ENCODE measurements at regions of chr6 and their contacts with region 1.

Region 1: GRCh38 chr6:34055223-34055933 is 90.5 kb downstream of the GRM4 start:
- DNase-seq: peak; percentile 60 to 87
- H3K4me3 ChIP-seq: no peak overlapping the region
- H3K27ac ChIP-seq: no peak overlapping the region
- H3K4me1 ChIP-seq: peaks cover 6 to 18% (median 11%) of the 10 kb centered on the region in 4 experiments
- H3K27me3 ChIP-seq: peaks cover 0 to 2% (median 0%) of the 10 kb centered on the region in 4 experiments; a peak in 1 of 7 replicates
- CTCF ChIP-seq: peak in 2 of 3 experiments; percentile 80 to 87; a peak in 3 of 4 replicates
- EP300 ChIP-seq: no peak
- POLR2A ChIP-seq: no peak
- RAD21 ChIP-seq: peak; percentile 68 to 75

Region 2: GRCh38 chr6:33926451-33926850 is 128.9 kb before region 1 on chr6:
- CTCF ChIA-PET with region 1: no interaction called
- POLR2A ChIA-PET with region 1: no interaction called
- DNase-seq: peak in 1 of 2 experiments; percentile 63
- H3K4me3 ChIP-seq: no peak overlapping the region; a peak in 1 of 8 replicates
- H3K27ac ChIP-seq: no peak overlapping the region
- H3K4me1 ChIP-seq: peaks cover 0 to 14% (median 6%) of the 10 kb centered on the region in 4 experiments; a peak in 3 of 7 replicates
- H3K27me3 ChIP-seq: peaks cover 0 to 3% (median 0%) of the 10 kb centered on the region in 4 experiments; a peak in 2 of 7 replicates
- CTCF ChIP-seq: no peak
- EP300 ChIP-seq: no peak
- POLR2A ChIP-seq: no peak
- RAD21 ChIP-seq: no peak

Region 3: GRCh38 chr6:33967966-33968724 is 87.2 kb before region 1 on chr6:
- CTCF ChIA-PET with region 1: interaction called, 10 read pairs
- POLR2A ChIA-PET with region 1: no interaction called
- DNase-seq: no peak
- H3K4me3 ChIP-seq: no peak overlapping the region
- H3K27ac ChIP-seq: no peak overlapping the region
- H3K4me1 ChIP-seq: peaks cover 0 to 2% (median 0%) of the 10 kb centered on the region in 4 experiments; a peak in 1 of 7 replicates
- H3K27me3 ChIP-seq: no peaks in the 10 kb centered on the region
- CTCF ChIP-seq: peak; percentile 86 to 95 (median 87)
- EP300 ChIP-seq: no peak
- POLR2A ChIP-seq: no peak
- RAD21 ChIP-seq: peak; percentile 87 to 89

Region 4: GRCh38 chr6:34018961-34019606 is 36.3 kb before region 1 on chr6:
- CTCF ChIA-PET with region 1: no interaction called
- POLR2A ChIA-PET with region 1: no interaction called
- DNase-seq: no peak
- H3K4me3 ChIP-seq: no peak overlapping the region
- H3K27ac ChIP-seq: no peak overlapping the region
- H3K4me1 ChIP-seq: peaks cover 0 to 2% (median under 1%) of the 10 kb centered on the region in 4 experiments; a peak in 4 of 7 replicates
- H3K27me3 ChIP-seq: peaks cover 0 to 24% (median 21%) of the 10 kb centered on the region in 4 experiments; a peak in 6 of 7 replicates
- CTCF ChIP-seq: no peak
- EP300 ChIP-seq: no peak
- POLR2A ChIP-seq: no peak
- RAD21 ChIP-seq: no peak

Region 5: GRCh38 chr6:34044945-34045595 is 10.3 kb before region 1 on chr6:
- CTCF ChIA-PET with region 1: interaction called, 23 read pairs
- POLR2A ChIA-PET with region 1: no interaction called
- DNase-seq: no peak
- H3K4me3 ChIP-seq: no peak overlapping the region
- H3K27ac ChIP-seq: no peak overlapping the region
- H3K4me1 ChIP-seq: peaks cover 0 to 13% (median 8%) of the 10 kb centered on the region in 4 experiments; a peak in 6 of 7 replicates
- H3K27me3 ChIP-seq: no peaks in the 10 kb centered on the region
- CTCF ChIP-seq: no peak
- EP300 ChIP-seq: no peak
- POLR2A ChIP-seq: no peak
- RAD21 ChIP-seq: no peak

Region 6: DNA sequence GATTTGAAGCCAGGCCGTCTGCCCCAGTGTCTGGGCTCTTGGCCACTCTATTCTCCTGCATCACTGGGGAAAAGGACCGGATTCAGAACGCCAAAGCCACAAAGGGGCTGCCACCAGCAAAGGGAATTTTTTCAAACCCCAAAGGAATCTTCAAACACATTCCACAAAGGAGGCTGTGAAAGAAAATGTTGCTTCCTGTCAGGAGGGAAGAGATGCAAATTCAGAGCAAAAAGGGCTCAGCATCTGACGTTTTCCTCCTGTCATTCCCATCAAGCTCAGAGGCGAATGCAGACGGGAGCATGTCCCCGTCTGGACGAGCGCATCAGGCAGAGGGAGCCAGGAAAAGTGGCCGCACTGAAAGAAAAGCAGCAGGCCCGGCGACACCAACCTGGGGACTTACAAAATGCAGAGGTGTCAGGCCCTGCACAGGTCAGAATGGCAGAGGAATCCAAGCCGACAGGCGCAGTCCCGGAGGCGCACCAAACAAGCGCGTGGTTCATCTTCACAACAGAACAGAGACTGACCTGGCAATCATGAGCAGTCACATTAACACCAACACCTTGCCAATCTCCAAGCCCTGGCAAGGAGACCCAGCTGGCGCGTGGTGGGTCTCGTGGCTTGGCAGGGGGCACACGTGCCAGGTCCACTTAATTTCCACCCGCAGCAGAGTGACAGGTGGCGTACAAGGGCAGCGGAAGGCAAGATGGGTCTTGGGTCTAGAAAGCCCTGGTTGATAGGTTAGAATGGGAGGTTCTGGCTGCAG is 27.7 kb after region 1 on chr6:
- CTCF ChIA-PET with region 1: interaction called, 11 read pairs
- POLR2A ChIA-PET with region 1: no interaction called
- DNase-seq: no peak
- H3K4me3 ChIP-seq: no peak overlapping the region
- H3K27ac ChIP-seq: no peak overlapping the region
- H3K4me1 ChIP-seq: peaks cover 0 to 10% (median 2%) of the 10 kb centered on the region in 4 experiments; a peak in 3 of 7 replicates
- H3K27me3 ChIP-seq: no peaks in the 10 kb centered on the region
- CTCF ChIP-seq: no peak
- EP300 ChIP-seq: no peak
- POLR2A ChIP-seq: no peak
- RAD21 ChIP-seq: no peak

Region 7: GRCh38 chr6:34098045-34098936 is 42.9 kb after region 1 on chr6:
- CTCF ChIA-PET with region 1: interaction called, 12 read pairs
- POLR2A ChIA-PET with region 1: no interaction called
- DNase-seq: no peak
- H3K4me3 ChIP-seq: no peak overlapping the region
- H3K27ac ChIP-seq: no peak overlapping the region
- H3K4me1 ChIP-seq: peaks cover 0 to 30% (median 15%) of the 10 kb centered on the region in 4 experiments; a peak in 6 of 7 replicates
- H3K27me3 ChIP-seq: no peaks in the 10 kb centered on the region
- CTCF ChIP-seq: no peak
- EP300 ChIP-seq: no peak
- POLR2A ChIP-seq: no peak
- RAD21 ChIP-seq: no peak

Region 8: GRCh38 chr6:34145161-34146020 is 90.0 kb after region 1 on chr6:
- CTCF ChIA-PET with region 1: interaction called, 61 read pairs
- POLR2A ChIA-PET with region 1: interaction called, 5 read pairs
- DNase-seq: peak in 1 of 2 experiments; percentile 80
- H3K4me3 ChIP-seq: peak overlapping the region; percentile 51 to 77 (median 64)
- H3K27ac ChIP-seq: no peak overlapping the region
- H3K4me1 ChIP-seq: peaks cover 12 to 57% (median 47%) of the 10 kb centered on the region in 4 experiments
- H3K27me3 ChIP-seq: peaks cover 0 to 46% (median 31%) of the 10 kb centered on the region in 4 experiments; a peak in 6 of 7 replicates
- CTCF ChIP-seq: no peak
- EP300 ChIP-seq: no peak
- POLR2A ChIP-seq: no peak
- RAD21 ChIP-seq: no peak; a peak in 1 of 4 replicates

Region 9: GRCh38 chr6:34556031-34556892 is 500.9 kb after region 1 on chr6 and contains the start of gene SPDEF:
- CTCF ChIA-PET with region 1: no interaction called
- POLR2A ChIA-PET with region 1: no interaction called
- DNase-seq: no peak
- H3K4me3 ChIP-seq: no peak within 1 kb of the TSS
- H3K27ac ChIP-seq: no peak within 1 kb of the TSS
- H3K4me1 ChIP-seq: peaks cover 0 to 9% (median 5%) of the 10 kb centered on the region in 4 experiments; a peak in 4 of 7 replicates
- H3K27me3 ChIP-seq: no peaks in the 10 kb centered on the region
- CTCF ChIP-seq: peak in 1 of 3 experiments; percentile 13; a peak in 1 of 4 replicates
- EP300 ChIP-seq: no peak
- POLR2A ChIP-seq: no peak
- RAD21 ChIP-seq: no peak; a peak in 1 of 4 replicates
- total RNA-seq, gene SPDEF: 0.15 TPM in 1 of 2 replicates, not detected in the other

Measured in H1 (cell line).